IMR-90 (cell line): ENCODE measurements at regions of chr13 and their contacts with region 1.

Region 1: DNA sequence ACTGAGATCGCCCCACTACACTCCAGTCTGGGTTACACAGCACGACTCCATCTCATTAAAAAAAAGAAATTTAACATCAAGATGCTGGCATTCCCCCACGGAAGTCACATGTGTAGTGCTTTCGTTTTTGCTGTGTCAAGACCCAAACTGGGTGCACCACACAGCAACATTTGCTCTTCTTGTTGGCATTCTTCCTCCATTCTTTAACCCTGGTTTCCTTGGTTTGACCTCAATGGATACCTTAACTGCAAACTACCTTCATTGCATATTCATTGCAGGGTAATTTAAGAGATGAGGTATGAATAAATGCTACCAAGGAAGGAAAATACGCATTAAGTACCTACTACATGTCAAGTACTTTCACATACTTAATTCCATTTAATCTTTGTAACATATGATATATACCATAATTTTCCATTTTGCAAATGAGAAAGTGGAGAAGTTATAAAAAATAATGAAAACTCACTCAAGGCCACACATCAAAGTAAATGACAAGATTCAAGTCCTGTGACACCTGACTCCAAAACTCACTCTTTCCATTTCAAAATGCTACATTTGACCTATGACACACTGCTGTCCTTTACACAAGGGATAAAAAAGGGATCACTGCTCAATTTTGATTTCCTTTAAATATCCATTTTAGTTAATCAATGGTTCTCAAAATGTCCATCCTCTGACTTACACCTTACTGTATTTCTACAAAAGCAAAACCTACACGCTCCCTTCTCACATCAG is 59.2 kb downstream of the STK24 start:
- DNase-seq: no peak
- ATAC-seq: no peak
- H3K4me3 ChIP-seq: no peak overlapping the region
- H3K27ac ChIP-seq: no peak overlapping the region
- H3K4me1 ChIP-seq: peaks cover 15% of the 10 kb centered on the region
- H3K27me3 ChIP-seq: no peaks in the 10 kb centered on the region
- CTCF ChIP-seq: no peak
- POLR2A ChIP-seq: no peak
- RAD21 ChIP-seq: no peak

Region 2: GRCh38 chr13:98476538-98476966 is 41.2 kb before region 1 on chr13:
- CTCF ChIA-PET with region 1: no interaction called
- POLR2A ChIA-PET with region 1: no interaction called
- dilution Hi-C with region 1: no loop called
- in situ Hi-C with region 1: no loop called
- intact Hi-C with region 1: no loop called
- DNase-seq: peak; percentile 92
- ATAC-seq: peak; percentile 90
- H3K4me3 ChIP-seq: no peak overlapping the region
- H3K27ac ChIP-seq: peak overlapping the region; percentile 68
- H3K4me1 ChIP-seq: peaks cover 19% of the 10 kb centered on the region
- H3K27me3 ChIP-seq: no peaks in the 10 kb centered on the region
- CTCF ChIP-seq: no peak
- POLR2A ChIP-seq: no peak
- RAD21 ChIP-seq: no peak

Region 3: DNA sequence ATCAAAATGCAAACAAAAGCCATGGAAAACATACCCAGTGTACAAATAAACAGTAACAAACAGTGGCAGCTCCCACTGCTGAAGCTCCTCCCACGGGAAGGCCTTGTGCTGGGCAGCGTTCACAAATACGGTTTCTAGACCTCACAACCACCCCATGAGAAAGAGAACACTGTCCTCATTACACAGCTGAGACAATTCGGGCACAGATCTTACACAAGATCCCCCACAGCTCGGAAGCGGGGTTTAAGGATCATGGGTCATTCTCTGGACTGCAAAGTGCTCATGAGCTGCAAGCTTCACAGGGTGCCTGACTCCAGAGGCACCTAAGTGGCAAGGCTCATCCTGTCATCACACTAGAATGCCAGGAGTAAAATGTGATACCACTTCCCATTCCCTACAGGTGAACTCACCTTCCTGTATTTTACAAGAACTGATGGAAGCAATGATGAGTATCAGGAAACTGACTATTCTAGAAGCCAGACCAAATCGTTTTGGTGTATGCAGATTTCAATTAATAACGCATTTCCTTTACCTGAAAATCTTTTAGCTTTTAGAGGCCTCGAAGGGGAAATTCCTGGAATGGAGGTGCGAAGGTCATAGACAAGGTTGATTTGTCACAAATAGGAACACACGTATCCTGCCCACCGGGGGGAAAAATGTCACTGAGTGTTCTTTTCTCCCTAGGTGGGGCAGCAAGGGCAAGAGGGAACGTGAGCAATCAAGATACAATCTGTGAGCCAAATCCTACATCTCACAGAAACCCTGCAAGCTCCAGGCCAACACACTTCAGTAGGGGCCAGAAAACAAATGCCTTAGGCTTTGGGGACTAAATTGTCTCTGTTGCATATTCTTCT is 18.0 kb after region 1 on chr13:
- CTCF ChIA-PET with region 1: no interaction called
- POLR2A ChIA-PET with region 1: interaction called, 12 read pairs
- dilution Hi-C with region 1: no loop called
- in situ Hi-C with region 1: no loop called
- intact Hi-C with region 1: no loop called
- DNase-seq: no peak
- ATAC-seq: peak; percentile 35; the same call in 1 of the 2 replicates
- H3K4me3 ChIP-seq: no peak overlapping the region
- H3K27ac ChIP-seq: no peak overlapping the region
- H3K4me1 ChIP-seq: peaks cover 9% of the 10 kb centered on the region
- H3K27me3 ChIP-seq: no peaks in the 10 kb centered on the region
- CTCF ChIP-seq: no peak
- POLR2A ChIP-seq: no peak
- RAD21 ChIP-seq: no peak